Mammary epithelial cell (primary cell): ENCODE measurements at regions of chr7 and their contacts with region 1.

Region 1: GRCh38 chr7:54967384-54967783 is 51.4 kb upstream of the EGFR start:
- DNase-seq: peak; percentile 100
- H3K4me3 ChIP-seq: no peak overlapping the region
- H3K27ac ChIP-seq: peak overlapping the region; percentile 97
- H3K4me1 ChIP-seq: peaks cover 54% of the 10 kb centered on the region
- H3K27me3 ChIP-seq: no peaks in the 10 kb centered on the region
- CTCF ChIP-seq: no peak

Region 2: GRCh38 chr7:54858008-54858692 is 109.2 kb before region 1 on chr7:
- CTCF ChIA-PET with region 1: no interaction called
- dilution Hi-C with region 1: no loop called
- in situ Hi-C with region 1: no loop called
- intact Hi-C with region 1: loop called (anchors 1 kb)
- DNase-seq: peak; percentile 83
- H3K4me3 ChIP-seq: no peak overlapping the region
- H3K27ac ChIP-seq: peak overlapping the region; percentile 78
- H3K4me1 ChIP-seq: peaks cover 37% of the 10 kb centered on the region
- H3K27me3 ChIP-seq: no peaks in the 10 kb centered on the region
- CTCF ChIP-seq: no peak

Region 3: GRCh38 chr7:54869513-54869912 is 97.9 kb before region 1 on chr7:
- CTCF ChIA-PET with region 1: no interaction called
- dilution Hi-C with region 1: no loop called
- in situ Hi-C with region 1: no loop called
- intact Hi-C with region 1: no loop called
- DNase-seq: no peak
- H3K4me3 ChIP-seq: no peak overlapping the region
- H3K27ac ChIP-seq: no peak overlapping the region
- H3K4me1 ChIP-seq: no peaks in the 10 kb centered on the region
- H3K27me3 ChIP-seq: no peaks in the 10 kb centered on the region
- CTCF ChIP-seq: no peak

Region 4: DNA sequence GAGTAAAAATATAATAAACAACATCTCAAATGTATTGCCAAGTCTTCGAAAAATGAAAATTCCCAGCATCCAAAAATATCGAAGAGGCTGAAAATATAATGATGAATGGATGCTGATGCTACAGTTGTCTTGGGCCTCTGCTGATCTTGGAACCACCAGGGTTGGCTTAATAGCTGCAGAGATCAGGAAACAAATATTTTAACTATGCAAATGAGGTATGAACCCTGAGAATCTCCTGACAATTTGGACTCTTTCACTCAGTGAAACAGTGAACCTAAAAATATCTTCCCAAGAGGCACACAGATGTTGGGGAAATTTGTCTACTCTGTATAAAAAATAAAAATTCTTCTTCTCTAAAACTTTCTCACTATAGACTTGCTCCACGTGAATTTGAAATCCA is 46.3 kb before region 1 on chr7:
- CTCF ChIA-PET with region 1: no interaction called
- dilution Hi-C with region 1: no loop called
- in situ Hi-C with region 1: no loop called
- intact Hi-C with region 1: no loop called
- DNase-seq: no peak
- H3K4me3 ChIP-seq: no peak overlapping the region
- H3K27ac ChIP-seq: no peak overlapping the region
- H3K4me1 ChIP-seq: no peaks in the 10 kb centered on the region
- H3K27me3 ChIP-seq: no peaks in the 10 kb centered on the region
- CTCF ChIP-seq: no peak

Region 5: GRCh38 chr7:54932818-54933543 is 34.4 kb before region 1 on chr7:
- CTCF ChIA-PET with region 1: no interaction called
- dilution Hi-C with region 1: no loop called
- in situ Hi-C with region 1: no loop called
- intact Hi-C with region 1: loop called (anchors 1 kb)
- DNase-seq: peak; percentile 64
- H3K4me3 ChIP-seq: peak overlapping the region; percentile 30 to 52 (median 41)
- H3K27ac ChIP-seq: peak overlapping the region; percentile 42
- H3K4me1 ChIP-seq: peaks cover 8% of the 10 kb centered on the region
- H3K27me3 ChIP-seq: no peaks in the 10 kb centered on the region
- CTCF ChIP-seq: no peak

Region 6: GRCh38 chr7:54985405-54986330 is 18.3 kb after region 1 on chr7:
- CTCF ChIA-PET with region 1: no interaction called
- dilution Hi-C with region 1: no loop called
- in situ Hi-C with region 1: no loop called
- intact Hi-C with region 1: loop called (anchors 1 kb)
- DNase-seq: peak; percentile 93
- H3K4me3 ChIP-seq: peak overlapping the region in 2 of 3 experiments; percentile 1 to 25
- H3K27ac ChIP-seq: peak overlapping the region; percentile 96
- H3K4me1 ChIP-seq: peaks cover 31% of the 10 kb centered on the region
- H3K27me3 ChIP-seq: no peaks in the 10 kb centered on the region
- CTCF ChIP-seq: no peak

Region 7: DNA sequence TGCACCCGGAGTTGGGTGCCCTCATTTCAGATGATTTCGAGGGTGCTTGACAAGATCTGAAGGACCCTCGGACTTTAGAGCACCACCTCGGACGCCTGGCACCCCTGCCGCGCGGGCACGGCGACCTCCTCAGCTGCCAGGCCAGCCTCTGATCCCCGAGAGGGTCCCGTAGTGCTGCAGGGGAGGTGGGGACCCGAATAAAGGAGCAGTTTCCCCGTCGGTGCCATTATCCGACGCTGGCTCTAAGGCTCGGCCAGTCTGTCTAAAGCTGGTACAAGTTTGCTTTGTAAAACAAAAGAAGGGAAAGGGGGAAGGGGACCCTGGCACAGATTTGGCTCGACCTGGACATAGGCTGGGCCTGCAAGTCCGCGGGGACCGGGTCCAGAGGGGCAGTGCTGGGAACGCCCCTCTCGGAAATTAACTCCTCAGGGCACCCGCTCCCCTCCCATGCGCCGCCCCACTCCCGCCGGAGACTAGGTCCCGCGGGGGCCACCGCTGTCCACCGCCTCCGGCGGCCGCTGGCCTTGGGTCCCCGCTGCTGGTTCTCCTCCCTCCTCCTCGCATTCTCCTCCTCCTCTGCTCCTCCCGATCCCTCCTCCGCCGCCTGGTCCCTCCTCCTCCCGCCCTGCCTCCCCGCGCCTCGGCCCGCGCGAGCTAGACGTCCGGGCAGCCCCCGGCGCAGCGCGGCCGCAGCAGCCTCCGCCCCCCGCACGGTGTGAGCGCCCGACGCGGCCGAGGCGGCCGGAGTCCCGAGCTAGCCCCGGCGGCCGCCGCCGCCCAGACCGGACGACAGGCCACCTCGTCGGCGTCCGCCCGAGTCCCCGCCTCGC is 51.2 kb after region 1 on chr7 and contains the start of gene EGFR:
- CTCF ChIA-PET with region 1: no interaction called
- dilution Hi-C with region 1: loop called (anchors 5 kb)
- in situ Hi-C with region 1: no loop called
- intact Hi-C with region 1: loop called (anchors 1 kb)
- DNase-seq: peak; percentile 80
- H3K4me3 ChIP-seq: peak within 1 kb of the TSS; percentile 62 to 83 (median 67)
- H3K27ac ChIP-seq: peak within 1 kb of the TSS; percentile 85
- H3K4me1 ChIP-seq: peaks cover 34% of the 10 kb centered on the region
- H3K27me3 ChIP-seq: no peaks in the 10 kb centered on the region
- CTCF ChIP-seq: no peak
- total RNA-seq, gene EGFR: 304 to 534 TPM

Region 8: GRCh38 chr7:55387062-55387965 is 419.9 kb after region 1 on chr7:
- CTCF ChIA-PET with region 1: no interaction called
- dilution Hi-C with region 1: no loop called
- in situ Hi-C with region 1: no loop called
- intact Hi-C with region 1: no loop called
- DNase-seq: peak; percentile 11
- H3K4me3 ChIP-seq: no peak overlapping the region
- H3K27ac ChIP-seq: no peak overlapping the region
- H3K4me1 ChIP-seq: no peaks in the 10 kb centered on the region
- H3K27me3 ChIP-seq: no peaks in the 10 kb centered on the region
- CTCF ChIP-seq: no peak